Activated CD8-positive, alpha-beta T cell treated with anti-CD3 and anti-CD28 coated beads, Interleukin-2, amount 10 ng/mL, durations not matched to agents 7 days and 5 days (primary cell): ENCODE measurements at regions of chr19 and their contacts with region 1.

Region 1: GRCh38 chr19:11380653-11381534 is 3.2 kb downstream of the EPOR start:
- DNase-seq: peak; percentile 99
- ATAC-seq: peak; percentile 86
- H3K4me3 Mint-ChIP-seq: peak overlapping the region; percentile 84
- H3K27ac Mint-ChIP-seq: peak overlapping the region; percentile 98
- H3K4me1 Mint-ChIP-seq: peaks cover 54% of the 10 kb centered on the region
- H3K27me3 Mint-ChIP-seq: peaks cover 12% of the 10 kb centered on the region

Region 2: GRCh38 chr19:11293433-11294389 is 87.2 kb before region 1 on chr19:
- CTCF ChIA-PET with region 1: interaction called, 14 read pairs
- POLR2A ChIA-PET with region 1: no interaction called
- DNase-seq: peak; percentile 86
- ATAC-seq: peak; percentile 98
- H3K4me3 Mint-ChIP-seq: peak overlapping the region; percentile 54
- H3K27ac Mint-ChIP-seq: no peak overlapping the region
- H3K4me1 Mint-ChIP-seq: peaks cover 10% of the 10 kb centered on the region
- H3K27me3 Mint-ChIP-seq: peaks cover 23% of the 10 kb centered on the region

Region 3: DNA sequence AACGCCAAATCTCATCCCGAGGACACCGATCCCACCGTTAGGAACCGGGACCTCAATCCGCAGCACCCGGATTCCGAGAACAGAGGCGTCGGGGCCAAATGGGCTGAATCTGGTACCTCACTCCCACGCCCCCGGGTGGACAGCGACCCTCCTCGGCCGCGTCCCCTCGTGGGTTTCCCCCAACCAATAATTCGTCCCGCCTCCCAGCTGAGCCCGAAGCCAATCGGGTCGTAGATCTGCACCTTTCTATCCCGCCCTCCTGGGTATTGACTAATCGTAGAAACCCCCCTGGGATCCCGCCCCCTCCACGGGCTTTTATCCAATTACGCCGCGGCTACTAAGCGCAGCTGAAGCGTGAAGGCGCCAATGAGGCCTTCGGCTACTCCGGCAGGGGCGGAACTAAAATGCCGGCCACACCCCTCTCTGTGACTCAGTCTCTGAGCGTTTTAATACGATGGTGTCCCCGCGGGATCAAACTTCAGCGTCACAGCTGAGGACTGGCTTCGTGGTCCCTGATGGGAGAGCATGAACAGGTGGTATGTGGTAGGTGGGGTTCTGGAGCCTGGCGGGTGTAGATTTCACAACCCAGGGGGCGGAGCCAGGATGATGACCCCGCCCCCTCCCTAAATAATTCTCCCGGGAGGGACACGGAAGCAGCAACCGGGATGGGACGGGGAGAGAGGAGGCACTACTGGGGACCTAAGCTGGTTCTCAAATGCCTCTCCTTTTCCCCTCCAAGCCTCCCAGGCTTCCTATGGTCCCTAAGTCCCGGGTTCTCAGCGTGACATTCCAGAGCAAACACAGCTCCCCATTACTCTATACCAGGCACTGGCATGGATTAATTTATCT is 34.6 kb before region 1 on chr19 and contains the starts of genes CCDC159 and TMEM205:
- CTCF ChIA-PET with region 1: interaction called, 20 read pairs
- POLR2A ChIA-PET with region 1: interaction called, 12 read pairs
- DNase-seq: peak; percentile 100
- ATAC-seq: peak; percentile 99
- H3K4me3 Mint-ChIP-seq: peak within 1 kb of the TSS; percentile 85
- H3K27ac Mint-ChIP-seq: peak within 1 kb of the TSS; percentile 92
- H3K4me1 Mint-ChIP-seq: peaks cover 26% of the 10 kb centered on the region
- H3K27me3 Mint-ChIP-seq: no peaks in the 10 kb centered on the region
- total RNA-seq, gene CCDC159: 9.9 to 13.6 TPM
- total RNA-seq, gene TMEM205: 23.6 to 29.6 TPM

Region 4: DNA sequence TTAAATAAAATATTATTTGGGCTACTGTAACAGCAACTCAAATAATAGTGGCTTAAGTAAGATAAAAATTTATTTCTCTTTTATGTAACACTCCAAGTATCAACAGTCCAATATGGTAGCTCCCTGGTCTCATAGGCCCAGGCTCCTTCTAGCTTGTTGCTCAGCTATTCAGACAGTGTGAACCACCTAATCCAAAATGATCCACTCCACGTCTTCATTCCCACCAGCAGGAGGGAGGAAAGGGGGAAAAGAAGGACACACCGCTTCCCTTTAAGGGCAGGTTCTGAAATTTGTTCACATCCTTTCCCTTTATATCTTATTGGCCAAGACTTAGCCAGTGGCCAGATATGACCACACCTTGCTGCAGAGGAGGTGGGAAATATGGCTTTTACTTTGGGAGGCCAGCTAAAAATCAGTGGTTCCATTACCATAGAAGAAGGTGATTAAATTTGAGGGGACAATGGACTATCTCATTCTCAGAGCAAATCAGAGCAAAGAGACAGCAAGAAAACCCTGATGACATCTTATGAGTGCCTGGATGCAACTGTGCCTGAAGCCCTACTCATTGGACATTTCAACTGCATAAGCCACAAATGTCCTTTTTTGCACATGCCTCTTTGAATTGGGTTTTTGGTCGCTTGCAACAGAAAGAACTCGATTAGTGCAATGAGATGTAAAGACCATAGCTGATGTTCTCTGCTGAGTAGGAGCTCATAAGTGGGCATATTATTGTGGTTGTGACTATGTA is 10.2 kb after region 1 on chr19:
- CTCF ChIA-PET with region 1: interaction called, 19 read pairs
- POLR2A ChIA-PET with region 1: interaction called, 4 read pairs
- DNase-seq: no peak
- ATAC-seq: no peak
- H3K4me3 Mint-ChIP-seq: no peak overlapping the region
- H3K27ac Mint-ChIP-seq: no peak overlapping the region
- H3K4me1 Mint-ChIP-seq: peaks cover 9% of the 10 kb centered on the region
- H3K27me3 Mint-ChIP-seq: peaks cover 10% of the 10 kb centered on the region

Region 5: DNA sequence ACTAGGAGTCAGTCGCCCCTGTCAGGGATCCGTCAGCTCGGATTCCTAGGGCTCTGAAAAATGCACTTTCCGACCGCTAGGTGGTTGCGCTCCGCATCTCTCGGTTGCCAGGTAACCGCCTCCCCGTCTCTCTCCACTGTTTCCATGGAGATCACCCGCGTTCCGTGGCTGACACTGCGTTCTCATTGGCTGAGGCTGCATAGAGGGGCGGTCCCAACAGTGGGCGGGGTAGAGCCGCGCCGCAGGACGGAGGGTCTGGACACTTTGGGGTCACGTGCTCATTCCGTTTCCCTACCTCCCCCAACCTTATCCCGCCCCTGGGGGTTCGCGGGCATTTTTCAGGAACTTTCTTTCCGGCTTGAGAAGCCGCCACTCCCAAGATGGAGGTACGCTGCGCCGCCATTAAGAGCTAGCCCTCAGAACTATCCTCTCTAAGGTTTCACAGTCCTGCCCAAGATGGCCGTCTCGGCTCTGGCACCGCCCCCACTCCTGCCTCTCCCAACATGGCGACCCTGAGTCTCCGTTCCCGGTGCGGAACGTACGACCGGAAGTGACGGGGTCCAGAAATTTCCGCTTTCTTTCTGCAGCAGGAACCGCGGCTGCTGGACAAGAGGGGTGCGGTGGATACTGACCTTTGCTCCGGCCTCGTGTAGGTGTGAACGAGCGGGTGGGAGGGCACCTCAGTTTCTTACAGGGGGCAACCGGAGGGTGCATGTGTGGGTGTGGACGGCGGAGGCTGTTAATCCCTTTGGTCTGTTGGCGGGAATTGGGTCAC is 54.4 kb after region 1 on chr19 and contains the starts of genes ODAD3 and PRKCSH:
- CTCF ChIA-PET with region 1: interaction called, 25 read pairs
- POLR2A ChIA-PET with region 1: interaction called, 10 read pairs
- DNase-seq: peak; percentile 100
- ATAC-seq: peak; percentile 96
- H3K4me3 Mint-ChIP-seq: peak within 1 kb of the TSS; percentile 100
- H3K27ac Mint-ChIP-seq: peak within 1 kb of the TSS; percentile 100
- H3K4me1 Mint-ChIP-seq: peaks cover 19% of the 10 kb centered on the region
- H3K27me3 Mint-ChIP-seq: peaks cover 6% of the 10 kb centered on the region
- total RNA-seq, gene ODAD3: not detected
- total RNA-seq, gene PRKCSH: 285 to 302 TPM

Region 6: DNA sequence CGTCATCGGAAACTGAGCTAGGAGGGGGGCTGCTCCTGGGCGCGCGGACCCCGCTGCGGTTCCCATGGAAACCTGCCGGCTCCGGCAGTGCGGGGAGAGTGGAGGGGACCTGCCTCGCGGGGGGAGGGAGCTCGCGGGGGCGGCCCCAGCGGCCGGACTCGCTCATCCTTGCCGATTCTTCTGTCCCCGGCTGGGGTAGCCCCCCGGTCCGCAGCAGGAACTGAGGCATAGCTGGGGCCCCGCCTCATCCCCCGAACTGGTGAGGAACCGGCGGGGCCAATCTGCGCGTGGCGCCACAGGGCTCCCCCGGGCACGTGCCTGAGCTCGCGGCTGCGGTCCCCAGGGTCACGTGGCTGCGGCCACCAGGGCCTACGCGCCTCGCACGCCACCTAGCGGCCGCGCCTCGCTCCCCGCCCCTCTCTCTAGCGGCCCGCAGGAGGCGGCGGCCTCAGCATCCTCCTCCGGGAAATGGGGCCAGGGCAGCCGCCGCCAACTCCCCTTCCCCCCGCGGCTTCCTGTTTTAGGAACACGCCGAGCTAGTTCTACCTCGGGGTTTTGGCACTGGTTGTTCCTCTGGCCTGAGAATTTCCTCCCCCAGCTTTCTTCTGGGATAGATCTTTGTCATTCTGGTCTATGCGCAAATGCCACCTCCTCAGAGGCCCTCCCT is 101.6 kb after region 1 on chr19:
- CTCF ChIA-PET with region 1: interaction called, 36 read pairs
- POLR2A ChIA-PET with region 1: interaction called, 7 read pairs
- DNase-seq: peak; percentile 91
- ATAC-seq: peak; percentile 80
- H3K4me3 Mint-ChIP-seq: peak overlapping the region; percentile 70
- H3K27ac Mint-ChIP-seq: peak overlapping the region; percentile 72
- H3K4me1 Mint-ChIP-seq: peaks cover 28% of the 10 kb centered on the region
- H3K27me3 Mint-ChIP-seq: peaks cover 27% of the 10 kb centered on the region